ENCODE measurements at regions of chr22 and their contacts with region 1.

Region 1: DNA sequence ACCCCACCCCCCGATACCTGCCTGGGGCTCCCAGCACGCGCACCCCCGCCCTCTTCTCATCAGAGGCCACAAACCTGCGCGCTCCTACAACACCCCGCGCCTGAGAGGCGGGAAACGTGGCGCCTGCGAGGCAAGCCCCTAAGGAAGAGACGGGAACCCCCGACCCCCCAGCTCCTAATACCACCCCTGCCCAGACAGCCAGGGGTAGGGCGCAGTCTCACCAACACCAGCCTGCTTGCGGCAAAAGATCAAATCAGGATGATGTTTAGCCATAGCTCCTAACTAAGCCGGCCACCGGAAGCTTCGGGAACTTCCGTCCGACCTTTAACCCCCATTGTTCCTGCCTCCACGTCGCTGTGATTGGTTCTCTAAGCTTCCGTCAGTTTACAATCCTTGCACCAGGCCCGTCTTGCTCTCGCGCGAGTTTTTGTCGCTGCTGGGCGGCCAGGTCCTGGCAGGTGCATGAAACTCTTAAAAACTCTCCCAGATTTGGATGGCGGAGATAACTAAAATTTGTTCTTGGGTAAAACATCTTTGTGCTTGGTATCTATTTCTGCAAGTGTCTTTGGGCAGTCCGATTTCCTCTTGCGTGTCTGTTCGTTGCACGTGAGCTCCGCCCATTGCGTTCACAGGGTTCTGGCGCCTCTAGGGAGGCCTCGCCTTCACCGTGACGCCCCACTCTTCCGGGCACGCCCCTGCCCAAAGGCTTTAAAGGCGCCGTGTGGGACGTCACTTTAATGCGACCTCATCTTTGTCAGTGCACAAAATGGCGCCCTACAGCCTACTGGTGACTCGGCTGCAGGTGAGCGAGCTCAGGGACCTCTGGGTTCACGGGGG is at the starts of genes ACO2 and PHF5A:
- DNase-seq: peak; percentile 96 to 98
- ATAC-seq: peak; percentile 96 to 99 (median 98)
- H3K4me3 ChIP-seq: peak within 1 kb of the TSS; percentile 80 to 100 (median 94)
- H3K27ac ChIP-seq: peak within 1 kb of the TSS; percentile 86 to 99 (median 97)
- H3K4me1 ChIP-seq: peaks cover 7 to 57% (median 51%) of the 10 kb centered on the region in 9 donors
- H3K27me3 ChIP-seq: no peaks in the 10 kb centered on the region
- CTCF ChIP-seq: no peak
- total RNA-seq, gene ACO2: 587 to 1,020 (median 900) TPM
- total RNA-seq, gene PHF5A: 13.3 to 27.2 (median 20.2) TPM

Region 2: GRCh38 chr22:41448189-41448808 is 20.3 kb before region 1 on chr22:
- intact Hi-C with region 1: loop called in 4 of 10 experiments (anchors 1 to 2 kb)
- DNase-seq: peak; percentile 93 to 98
- ATAC-seq: peak; percentile 75 to 87 (median 81)
- H3K4me3 ChIP-seq: peak overlapping the region; percentile 61 to 99 (median 96)
- H3K27ac ChIP-seq: peak overlapping the region; percentile 98 to 100 (median 100)
- H3K4me1 ChIP-seq: peaks cover 0 to 23% (median 16%) of the 10 kb centered on the region in 9 donors
- H3K27me3 ChIP-seq: no peaks in the 10 kb centered on the region
- CTCF ChIP-seq: no peak

Region 3: GRCh38 chr22:41508770-41509170 is 40.2 kb after region 1 on chr22:
- intact Hi-C with region 1: loop called in 4 of 10 experiments (anchors 5 kb)
- DNase-seq: peak; percentile 59 to 63
- ATAC-seq: peak; percentile 25 to 71 (median 49)
- H3K4me3 ChIP-seq: no peak overlapping the region
- H3K27ac ChIP-seq: peak overlapping the region in 9 of 10 donors; percentile 23 to 81 (median 54)
- H3K4me1 ChIP-seq: peaks cover 22 to 97% (median 73%) of the 10 kb centered on the region in 9 donors
- H3K27me3 ChIP-seq: no peaks in the 10 kb centered on the region
- CTCF ChIP-seq: peak in 6 of 9 donors; percentile 5 to 34 (median 22)

Region 4: DNA sequence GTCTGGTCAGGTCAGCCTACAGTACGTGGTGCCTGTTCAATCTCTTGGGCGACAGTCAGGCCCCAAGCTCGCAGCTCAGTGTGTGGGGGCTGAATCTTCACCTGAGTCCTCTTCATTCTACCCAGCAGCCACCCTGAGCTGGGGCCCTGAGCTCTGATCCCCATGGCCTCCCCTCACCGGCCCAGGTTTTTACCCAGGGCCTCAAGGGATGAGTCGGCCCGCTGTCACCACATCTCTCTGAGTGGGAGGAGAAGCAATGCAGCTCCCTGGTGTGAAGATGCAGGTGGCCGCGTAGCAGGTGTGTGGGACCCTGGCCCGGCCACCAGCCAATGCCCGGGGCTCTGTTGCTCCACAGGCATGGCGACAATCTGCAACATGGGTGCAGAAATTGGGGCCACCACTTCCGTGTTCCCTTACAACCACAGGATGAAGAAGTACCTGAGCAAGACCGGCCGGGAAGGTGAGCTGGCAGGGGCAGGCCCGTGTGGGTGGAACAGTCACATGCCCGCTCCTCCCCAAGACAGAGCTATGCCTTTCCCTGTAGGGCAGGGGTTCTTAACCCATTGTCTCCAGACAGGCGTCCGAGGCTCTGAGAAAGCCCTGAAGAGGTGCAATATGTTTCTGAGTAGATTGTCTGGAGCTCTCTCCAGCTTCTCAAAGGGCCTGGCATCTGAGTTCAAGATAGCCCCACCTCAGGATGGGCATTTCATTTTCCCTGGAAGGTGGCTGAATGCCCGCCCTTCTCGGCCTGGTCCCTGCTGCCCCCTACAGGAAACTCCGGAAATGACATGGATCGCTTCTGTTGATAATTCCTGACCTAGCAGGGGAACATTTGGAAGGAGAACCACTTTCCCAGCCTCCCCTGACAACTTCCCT is 48.8 kb after region 1 on chr22:
- intact Hi-C with region 1: loop called in 7 of 10 experiments (anchors 5 to 10 kb)
- DNase-seq: peak; percentile 61 to 76
- ATAC-seq: peak in 7 of 8 donors; percentile 21 to 60 (median 32)
- H3K4me3 ChIP-seq: no peak overlapping the region
- H3K27ac ChIP-seq: peak overlapping the region in 8 of 10 donors; percentile 19 to 70 (median 46)
- H3K4me1 ChIP-seq: peaks cover 1 to 62% (median 26%) of the 10 kb centered on the region in 9 donors
- H3K27me3 ChIP-seq: no peaks in the 10 kb centered on the region
- CTCF ChIP-seq: peak; percentile 81 to 94 (median 89)

Measured in heart right ventricle (tissue), 16 donors.